Heart left ventricle (tissue), 16 donors: ENCODE measurements at regions of chr2 and their contacts with region 1.

Region 1: GRCh38 chr2:204251158-204251997 is 293.9 kb upstream of the PARD3B start:
- DNase-seq: no peak
- ATAC-seq: no peak
- H3K4me3 ChIP-seq: no peak overlapping the region
- H3K27ac ChIP-seq: no peak overlapping the region
- H3K4me1 ChIP-seq: peaks cover 0 to 3% (median 0%) of the 10 kb centered on the region in 12 donors
- H3K27me3 ChIP-seq: no peaks in the 10 kb centered on the region
- CTCF ChIP-seq: no peak
- POLR2A ChIP-seq: no peak

Region 2: DNA sequence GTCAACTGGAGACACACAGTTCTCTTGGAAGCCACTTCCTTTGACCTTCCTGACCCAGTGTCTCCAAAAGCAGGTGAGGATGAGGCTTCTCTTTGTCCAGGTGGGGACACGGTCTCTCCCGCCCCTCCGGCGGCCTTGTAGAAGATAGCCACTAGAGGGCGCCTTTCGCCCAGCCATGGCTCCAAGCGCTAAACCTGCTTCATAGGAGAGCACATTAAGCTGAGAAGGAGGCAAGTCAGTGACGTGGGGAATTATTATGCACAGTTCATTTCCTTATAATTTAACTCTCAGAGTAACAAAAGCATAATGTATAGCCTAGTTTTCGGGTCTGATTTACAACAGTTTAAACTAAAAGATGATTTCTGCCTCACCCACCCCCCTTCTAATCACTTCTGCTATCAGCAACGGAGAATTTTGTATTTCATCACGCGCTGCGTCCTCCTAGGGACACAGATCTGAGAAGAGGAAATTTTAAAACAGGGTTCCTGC is 106.1 kb before region 1 on chr2:
- intact Hi-C with region 1: loop called in 1 of 10 experiments (anchors 10 kb)
- DNase-seq: peak; percentile 72 to 82 (median 75)
- ATAC-seq: peak; percentile 84 to 99 (median 95)
- H3K4me3 ChIP-seq: peak overlapping the region in 11 of 12 donors; percentile 25 to 61 (median 47)
- H3K27ac ChIP-seq: peak overlapping the region in 9 of 12 donors; percentile 3 to 67 (median 46)
- H3K4me1 ChIP-seq: peaks cover 0 to 15% (median 1%) of the 10 kb centered on the region in 12 donors
- H3K27me3 ChIP-seq: peaks cover 0 to 4% (median 0%) of the 10 kb centered on the region in 9 donors
- CTCF ChIP-seq: peak; percentile 89 to 99 (median 96)
- POLR2A ChIP-seq: no peak

Region 3: DNA sequence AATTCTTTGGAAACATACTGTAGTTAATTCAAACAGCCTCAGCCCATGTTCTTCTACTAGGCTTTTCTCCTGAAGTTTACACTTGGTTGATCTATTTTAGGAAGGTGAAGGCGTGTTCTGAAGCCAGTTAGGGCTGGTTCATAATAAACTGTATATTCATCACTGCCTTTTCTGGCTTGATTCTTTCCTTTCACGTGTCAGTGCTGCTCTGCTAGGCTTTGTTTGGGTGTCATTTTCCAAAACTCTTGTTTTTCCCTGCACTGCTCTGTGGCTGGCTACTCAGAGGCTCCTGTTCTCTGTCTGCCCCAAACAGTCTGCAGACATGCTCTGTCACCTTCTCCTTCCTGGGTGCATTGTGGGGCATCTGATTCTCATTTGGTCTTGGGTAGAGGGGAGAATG is 430.0 kb after region 1 on chr2:
- intact Hi-C with region 1: loop called in 1 of 10 experiments (anchors 10 kb)
- DNase-seq: no peak
- ATAC-seq: peak in 2 of 4 donors; percentile 28 to 64
- H3K4me3 ChIP-seq: no peak overlapping the region
- H3K27ac ChIP-seq: peak overlapping the region in 1 of 12 donors; percentile 27
- H3K4me1 ChIP-seq: peaks cover 0 to 14% (median 2%) of the 10 kb centered on the region in 12 donors
- H3K27me3 ChIP-seq: no peaks in the 10 kb centered on the region
- CTCF ChIP-seq: no peak
- POLR2A ChIP-seq: no peak

Region 4: GRCh38 chr2:204691911-204692510 is 440.6 kb after region 1 on chr2:
- intact Hi-C with region 1: loop called in 4 of 10 experiments (anchors 5 to 10 kb)
- DNase-seq: peak in 3 of 5 donors; percentile 26 to 45 (median 36)
- ATAC-seq: peak; percentile 71 to 91 (median 82)
- H3K4me3 ChIP-seq: no peak overlapping the region
- H3K27ac ChIP-seq: peak overlapping the region in 1 of 12 donors; percentile 20
- H3K4me1 ChIP-seq: peaks cover 0 to 20% (median 0%) of the 10 kb centered on the region in 12 donors
- H3K27me3 ChIP-seq: no peaks in the 10 kb centered on the region
- CTCF ChIP-seq: peak; percentile 55 to 81 (median 74)
- POLR2A ChIP-seq: no peak

Region 5: GRCh38 chr2:205885492-205886099 is 1634.2 kb after region 1 on chr2:
- intact Hi-C with region 1: loop called in 1 of 10 experiments (anchors 10 kb)
- DNase-seq: peak; percentile 75 to 93 (median 86)
- ATAC-seq: peak; percentile 75 to 96 (median 88)
- H3K4me3 ChIP-seq: no peak overlapping the region
- H3K27ac ChIP-seq: peak overlapping the region in 1 of 12 donors; percentile 40
- H3K4me1 ChIP-seq: no peaks in the 10 kb centered on the region
- H3K27me3 ChIP-seq: no peaks in the 10 kb centered on the region
- CTCF ChIP-seq: peak; percentile 80 to 92 (median 85)
- POLR2A ChIP-seq: no peak

Region 6: DNA sequence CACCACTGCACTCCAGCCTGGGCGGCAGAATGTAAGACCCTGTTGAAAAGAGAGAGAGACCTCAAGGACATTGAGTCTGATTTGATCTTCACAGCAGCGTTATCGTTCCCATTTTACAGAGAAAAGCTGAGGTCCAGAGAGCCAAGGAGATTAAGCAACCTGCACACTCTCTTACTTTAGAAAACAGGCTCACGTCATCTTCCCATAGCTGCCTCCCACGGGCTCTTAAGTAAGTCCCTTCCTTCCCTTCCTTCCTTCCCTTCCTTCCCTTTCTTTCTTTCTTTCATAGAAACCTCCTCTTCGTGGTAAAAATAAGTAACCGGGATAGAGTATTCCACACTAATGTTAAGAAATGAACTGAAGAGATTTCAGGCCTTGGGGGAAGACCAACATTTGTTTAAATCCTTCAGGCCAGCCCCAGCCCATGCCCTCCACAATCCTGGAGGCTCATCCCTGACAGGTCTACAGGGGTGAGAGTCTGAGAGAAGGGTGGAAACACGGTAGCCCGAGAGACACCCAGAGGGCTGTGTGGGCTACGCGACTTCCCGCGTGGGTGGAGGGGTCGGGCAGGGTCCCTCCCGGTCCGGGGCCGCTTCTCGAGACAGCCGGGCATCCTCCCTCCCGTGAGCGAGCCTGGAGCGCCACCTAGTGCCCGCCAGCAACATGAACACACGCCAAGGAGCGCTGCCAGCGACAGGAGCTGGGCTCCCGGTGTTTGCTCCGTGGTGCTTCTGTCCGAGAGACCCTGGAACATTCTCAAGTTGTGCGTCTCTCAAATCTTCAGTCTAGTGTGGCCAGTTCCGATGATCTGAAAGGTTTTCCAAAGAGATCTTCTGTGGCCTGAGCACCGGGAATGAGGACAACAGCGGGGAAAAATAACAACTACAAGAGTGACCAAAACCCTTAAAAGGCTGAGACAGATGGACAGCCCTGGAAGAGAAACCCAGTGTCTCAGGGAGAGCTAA is 1674.3 kb after region 1 on chr2:
- intact Hi-C with region 1: loop called in 2 of 10 experiments (anchors 5 to 10 kb)
- DNase-seq: peak; percentile 68 to 91 (median 77)
- ATAC-seq: peak; percentile 76 to 94 (median 90)
- H3K4me3 ChIP-seq: peak overlapping the region in 8 of 12 donors; percentile 6 to 44 (median 20)
- H3K27ac ChIP-seq: peak overlapping the region in 1 of 12 donors; percentile 28
- H3K4me1 ChIP-seq: peaks cover 0 to 20% (median 5%) of the 10 kb centered on the region in 12 donors
- H3K27me3 ChIP-seq: peaks cover 0 to 31% (median 0%) of the 10 kb centered on the region in 9 donors
- CTCF ChIP-seq: peak; percentile 83 to 98 (median 92)
- POLR2A ChIP-seq: no peak